Naive thymus-derived CD4-positive, alpha-beta T cell (primary cell): ENCODE measurements at regions of chr1 and their contacts with region 1.

Region 1: DNA sequence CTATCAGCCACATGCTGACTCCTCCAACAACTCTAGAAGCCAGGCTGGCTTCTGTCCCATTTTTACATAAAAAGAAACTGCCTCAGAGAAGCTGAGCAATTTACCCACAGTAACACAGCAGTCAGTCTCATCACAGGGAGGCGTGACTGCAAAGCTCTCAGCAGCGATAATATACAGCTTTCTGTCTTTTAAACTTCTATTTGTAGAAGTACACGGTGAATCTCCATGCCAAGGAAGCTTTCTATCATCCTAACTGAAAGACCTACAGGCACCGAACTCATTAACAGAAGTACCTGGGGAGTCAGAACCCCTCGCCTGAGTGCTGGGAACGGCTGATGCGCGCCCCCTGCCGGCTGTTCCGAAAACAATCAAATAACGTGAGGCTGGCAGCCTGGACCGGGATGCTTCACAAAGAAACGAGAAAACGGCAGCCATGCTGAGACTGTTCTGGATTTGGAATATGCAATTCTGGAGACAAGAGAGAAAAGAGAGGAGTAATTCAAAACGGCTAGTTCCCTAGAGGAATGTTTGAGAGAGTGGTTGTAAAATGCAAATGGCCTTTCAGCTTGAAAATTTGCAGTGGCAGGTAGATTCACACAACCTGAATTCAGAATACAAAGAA is 43.5 kb upstream of the RAB4A start:
- DNase-seq: peak; percentile 64 to 85 (median 80)
- ATAC-seq: peak; percentile 86
- H3K4me3 ChIP-seq: no peak overlapping the region
- H3K4me3 Mint-ChIP-seq: peak overlapping the region in 5 of 10 donors; percentile 12 to 63 (median 33)
- H3K27ac ChIP-seq: no peak overlapping the region
- H3K27ac Mint-ChIP-seq: peak overlapping the region in 6 of 9 donors; percentile 3 to 75 (median 25)
- H3K4me1 ChIP-seq: peaks cover 0 to 4% of the 10 kb centered on the region in 2 donors
- H3K4me1 Mint-ChIP-seq: peaks cover 4 to 33% (median 22%) of the 10 kb centered on the region in 7 donors
- H3K27me3 ChIP-seq: no peaks in the 10 kb centered on the region
- H3K27me3 Mint-ChIP-seq: peaks cover 0 to 32% (median 5%) of the 10 kb centered on the region in 5 donors

Region 2: GRCh38 chr1:228500901-228501871 is 726.2 kb before region 1 on chr1:
- CTCF ChIA-PET with region 1: no interaction called
- POLR2A ChIA-PET with region 1: no interaction called
- intact Hi-C with region 1: loop called (anchors 10 kb)
- DNase-seq: peak; percentile 72 to 89 (median 85)
- ATAC-seq: peak; percentile 99
- H3K4me3 ChIP-seq: peak overlapping the region; percentile 44
- H3K4me3 Mint-ChIP-seq: peak overlapping the region; percentile 71 to 86 (median 80)
- H3K27ac ChIP-seq: no peak overlapping the region
- H3K27ac Mint-ChIP-seq: peak overlapping the region in 5 of 9 donors; percentile 19 to 72 (median 66)
- H3K4me1 ChIP-seq: peaks cover 9 to 14% of the 10 kb centered on the region in 2 donors
- H3K4me1 Mint-ChIP-seq: peaks cover 9 to 31% (median 18%) of the 10 kb centered on the region in 7 donors
- H3K27me3 ChIP-seq: no peaks in the 10 kb centered on the region
- H3K27me3 Mint-ChIP-seq: peaks cover 0 to 8% (median 0%) of the 10 kb centered on the region in 5 donors

Region 3: DNA sequence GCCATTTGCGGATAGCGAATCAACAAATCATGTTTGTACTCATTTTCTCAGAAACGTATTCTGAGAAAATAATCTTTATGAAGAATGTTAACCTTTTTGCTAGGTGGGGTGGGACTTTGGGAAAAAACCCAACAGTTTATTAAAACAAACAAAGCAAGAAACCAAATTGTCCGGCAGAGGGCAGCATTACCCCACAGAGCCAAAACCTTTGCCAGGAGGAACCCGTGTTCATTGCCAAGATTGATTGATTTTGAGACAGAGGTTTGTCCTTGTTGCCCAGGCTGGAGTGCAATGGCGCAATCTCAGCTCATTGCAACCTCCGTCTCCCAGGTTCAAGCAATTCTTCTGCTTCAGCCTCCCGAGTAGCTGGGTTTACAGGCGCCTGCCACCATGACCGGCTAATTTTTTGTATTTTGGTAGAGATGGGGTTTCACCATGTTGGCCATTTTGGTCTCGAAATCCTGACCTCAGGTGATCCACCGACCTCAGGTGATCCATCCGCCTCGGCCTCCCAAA is 563.0 kb before region 1 on chr1:
- CTCF ChIA-PET with region 1: interaction called, 28 read pairs
- POLR2A ChIA-PET with region 1: no interaction called
- intact Hi-C with region 1: loop called (anchors 1 kb)
- DNase-seq: peak; percentile 54 to 83 (median 71)
- ATAC-seq: peak; percentile 73
- H3K4me3 ChIP-seq: no peak overlapping the region
- H3K4me3 Mint-ChIP-seq: no peak overlapping the region
- H3K27ac ChIP-seq: no peak overlapping the region
- H3K27ac Mint-ChIP-seq: no peak overlapping the region
- H3K4me1 ChIP-seq: no peaks in the 10 kb centered on the region
- H3K4me1 Mint-ChIP-seq: peaks cover 0 to 2% (median 0%) of the 10 kb centered on the region in 7 donors
- H3K27me3 ChIP-seq: no peaks in the 10 kb centered on the region
- H3K27me3 Mint-ChIP-seq: peaks cover 0 to 28% (median 11%) of the 10 kb centered on the region in 5 donors

Region 4: DNA sequence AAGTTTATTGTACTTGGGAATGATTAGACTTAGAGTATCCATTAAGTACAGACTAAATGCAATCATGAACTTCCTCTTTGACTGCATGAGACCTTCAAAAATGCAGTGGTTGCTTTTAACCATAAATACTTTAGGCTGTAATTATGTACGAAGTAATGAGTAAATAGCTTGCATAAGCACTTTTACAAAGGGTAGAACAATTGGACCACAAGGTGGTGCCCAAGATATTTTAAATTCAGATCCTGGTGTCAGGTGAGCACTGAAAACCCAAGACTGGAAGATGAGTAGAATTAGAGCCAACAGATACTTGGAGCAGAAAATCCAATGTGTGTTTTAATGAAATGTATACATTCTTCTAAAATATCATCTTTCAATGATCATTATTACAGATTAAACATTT is 535.5 kb before region 1 on chr1:
- CTCF ChIA-PET with region 1: interaction called, 7 read pairs
- POLR2A ChIA-PET with region 1: no interaction called
- intact Hi-C with region 1: loop called (anchors 1 kb)
- DNase-seq: peak in 7 of 9 donors; percentile 20 to 57 (median 42)
- ATAC-seq: peak; percentile 45
- H3K4me3 ChIP-seq: no peak overlapping the region
- H3K4me3 Mint-ChIP-seq: no peak overlapping the region
- H3K27ac ChIP-seq: no peak overlapping the region
- H3K27ac Mint-ChIP-seq: no peak overlapping the region
- H3K4me1 ChIP-seq: peaks cover 0 to 7% of the 10 kb centered on the region in 2 donors
- H3K4me1 Mint-ChIP-seq: peaks cover 5 to 14% (median 8%) of the 10 kb centered on the region in 7 donors
- H3K27me3 ChIP-seq: no peaks in the 10 kb centered on the region
- H3K27me3 Mint-ChIP-seq: peaks cover 6 to 38% (median 13%) of the 10 kb centered on the region in 5 donors

Region 5: DNA sequence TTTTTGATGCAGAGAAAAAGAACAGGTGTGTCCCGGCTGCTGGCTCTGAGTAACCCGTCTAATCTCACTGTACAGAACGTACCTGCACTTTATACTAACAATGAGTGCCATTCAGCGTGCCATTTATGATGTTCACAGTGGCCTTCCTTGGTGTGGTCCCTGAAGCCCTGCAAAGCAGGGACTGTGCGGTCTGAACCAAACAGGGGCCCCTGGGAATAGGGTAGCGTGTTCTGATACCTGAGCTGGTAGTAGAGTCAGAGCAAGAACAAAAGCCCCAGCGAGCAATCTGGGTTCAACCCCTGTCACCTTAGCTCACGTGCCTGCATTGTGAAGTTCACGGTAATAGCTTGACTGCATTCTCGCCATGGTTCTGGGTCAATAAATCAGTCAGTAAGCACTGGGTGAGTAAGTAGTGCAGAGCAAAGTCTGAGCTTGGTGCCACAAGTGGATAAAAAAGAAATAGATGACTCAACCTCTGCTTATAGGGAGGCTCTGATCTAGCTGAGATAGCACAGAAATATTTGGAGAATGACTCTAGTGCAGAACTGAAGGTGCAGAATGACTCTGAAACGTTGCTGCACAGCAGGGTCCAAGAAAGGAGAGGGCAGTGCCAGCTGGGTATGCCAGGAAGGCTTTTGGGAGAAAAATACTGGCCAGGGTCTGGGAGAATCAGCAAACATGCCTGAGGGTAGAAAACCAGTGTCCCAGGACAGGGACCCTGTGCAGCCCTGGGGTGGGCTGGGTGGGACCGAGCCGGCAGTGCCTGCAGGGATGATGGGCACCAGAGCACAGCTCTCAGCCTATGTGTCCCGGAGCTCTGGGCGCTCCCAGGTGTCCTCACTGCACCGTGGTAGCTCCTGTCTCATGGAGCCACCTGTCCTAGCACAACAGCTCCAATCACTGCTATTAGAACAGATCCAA is 366.2 kb before region 1 on chr1:
- CTCF ChIA-PET with region 1: no interaction called
- POLR2A ChIA-PET with region 1: no interaction called
- intact Hi-C with region 1: loop called in 1 of 2 experiments (anchors 10 kb)
- DNase-seq: no peak
- ATAC-seq: no peak
- H3K4me3 ChIP-seq: no peak overlapping the region
- H3K4me3 Mint-ChIP-seq: peak overlapping the region in 1 of 10 donors; percentile 26
- H3K27ac ChIP-seq: no peak overlapping the region
- H3K27ac Mint-ChIP-seq: peak overlapping the region in 1 of 9 donors; percentile 37
- H3K4me1 ChIP-seq: peaks cover 0 to 18% of the 10 kb centered on the region in 2 donors
- H3K4me1 Mint-ChIP-seq: peaks cover 17 to 42% (median 40%) of the 10 kb centered on the region in 7 donors
- H3K27me3 ChIP-seq: no peaks in the 10 kb centered on the region
- H3K27me3 Mint-ChIP-seq: peaks cover 0 to 30% (median 0%) of the 10 kb centered on the region in 5 donors

Region 6: GRCh38 chr1:229156872-229157271 is 70.5 kb before region 1 on chr1:
- CTCF ChIA-PET with region 1: no interaction called
- POLR2A ChIA-PET with region 1: no interaction called
- intact Hi-C with region 1: loop called in 1 of 2 experiments (anchors 2 kb)
- DNase-seq: no peak
- ATAC-seq: no peak
- H3K4me3 ChIP-seq: no peak overlapping the region
- H3K4me3 Mint-ChIP-seq: peak overlapping the region in 3 of 10 donors; percentile 22 to 72 (median 61)
- H3K27ac ChIP-seq: no peak overlapping the region
- H3K27ac Mint-ChIP-seq: peak overlapping the region in 2 of 9 donors; percentile 1 to 51
- H3K4me1 ChIP-seq: peaks cover 0 to 21% of the 10 kb centered on the region in 2 donors
- H3K4me1 Mint-ChIP-seq: peaks cover 12 to 50% (median 31%) of the 10 kb centered on the region in 7 donors
- H3K27me3 ChIP-seq: no peaks in the 10 kb centered on the region
- H3K27me3 Mint-ChIP-seq: peaks cover 0 to 4% (median 0%) of the 10 kb centered on the region in 5 donors